SK-N-SH (cell line): ENCODE measurements at regions of chr5 and their contacts with region 1.

Region 1: DNA sequence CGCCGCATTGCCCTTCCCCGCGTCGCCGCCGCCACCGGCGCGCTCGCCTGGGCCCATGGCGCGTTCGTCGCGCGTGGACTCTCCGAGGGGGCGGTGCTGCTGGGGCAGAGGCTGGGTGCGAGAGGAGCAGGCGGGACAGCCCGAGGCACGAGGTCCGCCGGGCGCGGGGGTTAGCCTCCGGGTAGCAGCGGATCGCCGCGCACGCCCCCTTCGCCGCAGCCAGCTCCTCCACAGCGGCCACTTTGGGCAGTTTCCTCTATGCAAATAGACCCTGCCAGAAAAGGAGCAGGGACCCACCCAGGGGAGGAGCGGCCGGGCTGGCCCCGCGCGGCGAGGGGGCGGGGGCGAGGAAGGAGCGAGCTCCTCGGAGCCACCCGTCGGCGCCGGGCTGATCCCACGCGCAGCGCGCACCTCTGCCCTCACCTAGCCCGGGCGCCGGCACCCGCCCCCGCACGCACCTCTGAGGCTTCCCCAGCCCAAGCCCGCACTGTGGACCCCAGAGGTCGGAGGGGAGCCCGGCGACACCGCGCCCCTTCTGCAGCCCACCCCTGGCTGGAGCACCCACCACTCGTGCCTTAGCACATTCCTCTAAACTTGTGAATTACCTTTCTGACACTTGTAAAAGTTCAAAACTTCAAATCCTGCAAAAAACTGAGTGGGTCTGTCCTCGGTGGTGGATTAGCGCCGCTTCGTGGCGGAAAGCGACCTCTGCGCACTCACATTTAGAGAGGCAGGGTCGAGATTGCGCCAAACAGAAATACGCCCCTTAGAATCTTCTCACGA is at the start of gene COL23A1:
- DNase-seq: peak; percentile 90
- H3K4me3 ChIP-seq: peak within 1 kb of the TSS; percentile 57 to 60; a peak in 3 of 4 replicates
- H3K27ac ChIP-seq: peak within 1 kb of the TSS in 1 of 2 experiments; percentile 65; a peak in 1 of 4 replicates
- H3K4me1 ChIP-seq: peaks cover 0 to 20% of the 10 kb centered on the region in 2 experiments; a peak in 1 of 4 replicates
- H3K27me3 ChIP-seq: no peaks in the 10 kb centered on the region; the same call in 1 of the 2 replicates
- CTCF ChIP-seq: peak; percentile 54
- EP300 ChIP-seq: no peak
- RAD21 ChIP-seq: peak; percentile 90
- polyA plus RNA-seq, gene COL23A1: 0.03 and 0.10 TPM in 2 replicates

Region 2: DNA sequence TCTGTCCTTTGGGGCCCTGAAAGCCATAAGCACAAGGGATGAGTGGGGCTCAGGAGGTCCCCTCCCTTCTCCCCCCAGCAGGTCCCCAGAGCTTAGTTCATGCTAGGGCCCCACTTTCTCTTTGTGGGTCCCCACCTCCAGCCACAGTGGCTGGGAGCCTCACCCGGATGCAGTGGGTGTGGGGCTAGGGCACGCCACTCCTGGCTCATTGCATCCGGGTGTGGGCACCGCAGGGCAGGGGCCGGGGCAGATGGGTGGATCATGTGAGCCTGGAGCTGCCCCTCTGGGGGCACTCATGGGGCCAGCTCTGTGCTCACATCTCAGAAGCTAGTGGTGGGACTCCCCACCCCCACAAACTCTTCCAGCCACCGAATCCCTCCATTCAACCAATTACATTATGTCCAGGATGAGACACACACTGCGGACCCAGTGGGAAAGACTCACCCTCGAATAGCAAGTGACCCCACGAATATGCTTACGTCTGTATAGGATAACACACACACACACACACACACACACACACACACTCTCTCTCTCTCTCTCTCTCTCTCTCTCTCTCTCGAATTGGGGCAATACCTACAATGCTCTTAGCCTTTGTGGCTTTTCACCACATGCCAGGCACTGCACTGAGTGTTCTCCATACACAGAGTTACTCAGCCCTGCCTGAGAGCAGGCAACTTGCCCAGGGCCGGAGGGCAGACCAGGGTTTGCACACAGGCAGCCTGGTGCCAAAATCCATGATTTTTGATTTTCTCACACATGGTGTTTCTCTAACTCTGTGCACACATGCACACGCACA is 340.9 kb before region 1 on chr5:
- CTCF ChIA-PET with region 1: interaction called, 19 read pairs
- POLR2A ChIA-PET with region 1: no interaction called
- DNase-seq: no peak
- H3K4me3 ChIP-seq: no peak overlapping the region
- H3K27ac ChIP-seq: no peak overlapping the region; a peak in 1 of 4 replicates
- H3K4me1 ChIP-seq: peaks cover 0 to 20% of the 10 kb centered on the region in 2 experiments; a peak in 1 of 4 replicates
- H3K27me3 ChIP-seq: no peaks in the 10 kb centered on the region
- CTCF ChIP-seq: no peak
- EP300 ChIP-seq: no peak
- RAD21 ChIP-seq: no peak

Region 3: GRCh38 chr5:178273665-178274541 is 316.4 kb before region 1 on chr5:
- CTCF ChIA-PET with region 1: interaction called, 265 read pairs
- POLR2A ChIA-PET with region 1: interaction called, 4 read pairs
- DNase-seq: no peak
- H3K4me3 ChIP-seq: no peak overlapping the region
- H3K27ac ChIP-seq: no peak overlapping the region; a peak in 1 of 4 replicates
- H3K4me1 ChIP-seq: peaks cover 0 to 6% of the 10 kb centered on the region in 2 experiments; a peak in 1 of 4 replicates
- H3K27me3 ChIP-seq: no peaks in the 10 kb centered on the region
- CTCF ChIP-seq: no peak
- EP300 ChIP-seq: no peak
- RAD21 ChIP-seq: no peak

Region 4: GRCh38 chr5:178461004-178461730 is 129.2 kb before region 1 on chr5:
- CTCF ChIA-PET with region 1: interaction called, 16 read pairs
- POLR2A ChIA-PET with region 1: no interaction called
- DNase-seq: peak; percentile 81
- H3K4me3 ChIP-seq: no peak overlapping the region
- H3K27ac ChIP-seq: peak overlapping the region in 1 of 2 experiments; percentile 82; a peak in 2 of 4 replicates
- H3K4me1 ChIP-seq: peaks cover 0 to 32% of the 10 kb centered on the region in 2 experiments; a peak in 1 of 4 replicates
- H3K27me3 ChIP-seq: no peaks in the 10 kb centered on the region
- CTCF ChIP-seq: peak; percentile 35; the same call in 1 of the 2 replicates
- EP300 ChIP-seq: no peak
- RAD21 ChIP-seq: peak; percentile 70

Region 5: GRCh38 chr5:178551059-178551458 is 39.3 kb before region 1 on chr5:
- CTCF ChIA-PET with region 1: interaction called, 47 read pairs
- POLR2A ChIA-PET with region 1: interaction called, 4 read pairs
- DNase-seq: peak; percentile 54
- H3K4me3 ChIP-seq: no peak overlapping the region
- H3K27ac ChIP-seq: no peak overlapping the region; a peak in 1 of 4 replicates
- H3K4me1 ChIP-seq: peaks cover 0 to 29% of the 10 kb centered on the region in 2 experiments; a peak in 2 of 4 replicates
- H3K27me3 ChIP-seq: no peaks in the 10 kb centered on the region
- CTCF ChIP-seq: peak; percentile 45
- EP300 ChIP-seq: no peak
- RAD21 ChIP-seq: peak; percentile 66

Region 6: DNA sequence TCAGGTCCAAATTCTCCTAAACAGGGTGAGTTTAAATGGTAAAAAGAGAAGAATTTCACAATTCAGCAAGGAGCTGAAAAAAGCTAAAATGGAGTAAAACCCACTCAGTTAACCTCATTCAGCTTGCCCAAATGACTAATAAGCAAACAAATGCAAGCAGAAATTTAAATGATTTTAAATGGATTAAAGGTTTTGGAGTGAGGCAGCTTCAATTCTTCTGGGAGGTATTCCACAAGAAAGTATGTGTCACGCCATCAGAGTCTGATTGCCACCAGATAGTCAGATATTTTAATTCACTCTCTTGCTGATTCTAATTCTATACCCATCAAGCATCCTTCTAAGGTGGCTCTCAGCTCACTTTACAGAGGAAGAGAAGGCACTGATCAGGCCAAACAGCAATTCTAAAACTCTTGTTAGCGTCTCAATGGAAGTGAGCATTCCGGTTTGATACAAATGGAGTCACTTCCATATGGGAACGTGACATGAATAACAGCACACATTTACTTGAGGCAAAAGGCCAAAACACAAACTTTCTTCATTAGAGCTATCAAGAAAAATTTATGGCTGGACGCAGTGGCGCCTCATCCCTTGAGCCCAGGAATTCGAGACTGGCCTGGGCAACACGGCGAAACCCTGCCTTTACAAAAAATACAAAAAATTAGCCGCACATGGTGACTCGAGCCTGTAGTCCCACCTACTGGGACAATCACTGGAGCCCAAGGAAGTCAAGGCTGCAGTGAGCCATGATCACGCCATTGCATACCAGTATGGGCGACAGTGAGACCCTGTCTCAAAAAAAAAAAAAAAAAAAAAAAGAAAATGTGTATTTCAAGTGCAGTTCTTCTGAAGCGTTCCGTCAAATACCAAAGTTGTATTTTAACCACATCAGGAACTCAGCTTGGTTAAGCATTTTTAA is 34.6 kb after region 1 on chr5:
- CTCF ChIA-PET with region 1: interaction called, 16 read pairs
- POLR2A ChIA-PET with region 1: no interaction called
- DNase-seq: no peak
- H3K4me3 ChIP-seq: peak overlapping the region; percentile 83 to 97
- H3K27ac ChIP-seq: peak overlapping the region; percentile 56 to 77
- H3K4me1 ChIP-seq: peaks cover 5 to 6% of the 10 kb centered on the region in 2 experiments; a peak in 2 of 4 replicates
- H3K27me3 ChIP-seq: no peaks in the 10 kb centered on the region
- CTCF ChIP-seq: no peak
- EP300 ChIP-seq: no peak
- RAD21 ChIP-seq: no peak

Region 7: GRCh38 chr5:178690208-178690607 is 99.9 kb after region 1 on chr5:
- CTCF ChIA-PET with region 1: no interaction called
- POLR2A ChIA-PET with region 1: no interaction called
- DNase-seq: no peak
- H3K4me3 ChIP-seq: no peak overlapping the region
- H3K27ac ChIP-seq: no peak overlapping the region
- H3K4me1 ChIP-seq: no peaks in the 10 kb centered on the region
- H3K27me3 ChIP-seq: no peaks in the 10 kb centered on the region
- CTCF ChIP-seq: no peak
- EP300 ChIP-seq: no peak
- RAD21 ChIP-seq: no peak